ENCODE measurements at regions of chrX and their contacts with region 1.

Region 1: DNA sequence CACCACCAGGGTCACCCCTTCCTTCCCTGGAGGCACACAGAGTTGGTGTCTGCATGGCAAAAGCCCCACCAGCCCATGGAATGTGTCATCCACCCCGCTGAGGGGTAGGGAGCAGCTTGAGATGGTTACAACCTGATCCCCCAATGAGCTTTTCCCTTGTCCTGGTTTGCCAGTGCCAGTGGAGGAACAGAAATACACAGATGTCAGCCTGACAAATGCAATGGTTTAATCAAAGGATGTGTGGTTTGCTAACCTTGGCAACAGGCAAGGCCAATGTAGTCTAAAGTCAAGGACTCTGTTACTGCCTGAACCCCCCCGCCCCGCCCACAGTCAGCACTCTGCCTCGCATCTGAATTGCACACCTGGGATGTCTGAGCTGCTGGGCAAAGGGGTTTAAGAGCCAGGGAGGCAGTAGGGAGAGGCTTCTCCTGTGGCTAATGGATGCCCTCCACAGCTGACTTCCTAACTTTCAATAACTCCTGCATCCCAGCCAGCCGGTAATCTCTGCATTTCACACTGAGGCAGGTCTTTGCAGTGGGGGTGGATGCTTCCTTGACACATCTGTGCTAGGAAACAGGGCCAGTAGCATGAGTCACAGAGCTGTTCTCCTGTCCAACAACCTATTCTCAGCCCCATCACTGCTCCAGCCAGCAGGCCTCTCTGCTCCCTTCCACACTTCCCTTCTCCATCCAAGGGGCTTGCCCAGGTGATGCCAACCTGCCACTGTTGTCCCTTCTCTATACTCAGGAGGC is 137.5 kb downstream of the AMMECR1 start:
- DNase-seq: peak; percentile 65
- H3K4me3 ChIP-seq: no peak overlapping the region
- CTCF ChIP-seq: no peak

Region 2: GRCh38 chrX:109270580-109271484 is 909.5 kb before region 1 on chrX:
- in situ Hi-C with region 1: no loop called
- DNase-seq: peak; percentile 1
- H3K4me3 ChIP-seq: no peak overlapping the region
- CTCF ChIP-seq: no peak

Region 3: GRCh38 chrX:110327336-110327735 is 147.0 kb after region 1 on chrX:
- in situ Hi-C with region 1: no loop called
- DNase-seq: no peak
- H3K4me3 ChIP-seq: no peak overlapping the region
- CTCF ChIP-seq: no peak

Region 4: DNA sequence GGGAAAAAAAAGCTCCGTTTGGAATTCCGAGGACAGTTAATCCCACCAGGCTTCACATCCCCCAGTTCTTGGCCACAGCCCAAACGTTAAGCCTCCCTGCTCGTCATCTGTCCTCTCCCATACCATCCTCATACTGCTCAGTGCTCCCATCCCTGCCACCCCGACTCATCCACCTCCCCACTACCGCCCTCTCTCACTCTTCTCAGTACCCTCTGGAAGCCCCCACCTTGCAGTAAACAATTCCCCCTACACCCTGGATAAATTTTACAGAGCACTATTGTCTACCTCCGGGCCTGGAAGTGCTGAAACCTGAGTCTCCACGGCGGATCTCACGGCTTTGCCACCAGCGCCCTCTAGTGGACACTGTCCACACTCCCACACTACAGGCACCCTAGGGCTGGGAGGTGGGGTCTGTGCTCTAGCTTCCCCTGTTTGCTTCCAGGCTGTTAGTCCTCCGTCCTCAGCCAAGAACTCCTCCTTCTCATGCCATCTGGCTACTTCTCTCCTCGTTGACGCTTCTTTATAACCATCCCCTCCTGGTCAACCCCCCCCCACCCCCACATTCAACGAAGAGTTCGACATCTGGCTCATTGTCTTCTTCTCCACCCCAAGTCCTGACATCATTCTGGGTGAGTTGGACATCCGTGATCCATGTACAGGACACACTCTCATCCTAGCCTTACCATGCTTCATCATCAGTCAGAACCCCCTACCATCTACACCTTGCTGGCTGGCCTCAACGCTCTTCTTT is 232.8 kb after region 1 on chrX:
- in situ Hi-C with region 1: loop called (anchors 25 kb)
- DNase-seq: peak; percentile 28
- H3K4me3 ChIP-seq: no peak overlapping the region
- CTCF ChIP-seq: peak; percentile 79